Ovary (tissue), 10 donors: ENCODE measurements at regions of chr12 and their contacts with region 1.

Region 1: DNA sequence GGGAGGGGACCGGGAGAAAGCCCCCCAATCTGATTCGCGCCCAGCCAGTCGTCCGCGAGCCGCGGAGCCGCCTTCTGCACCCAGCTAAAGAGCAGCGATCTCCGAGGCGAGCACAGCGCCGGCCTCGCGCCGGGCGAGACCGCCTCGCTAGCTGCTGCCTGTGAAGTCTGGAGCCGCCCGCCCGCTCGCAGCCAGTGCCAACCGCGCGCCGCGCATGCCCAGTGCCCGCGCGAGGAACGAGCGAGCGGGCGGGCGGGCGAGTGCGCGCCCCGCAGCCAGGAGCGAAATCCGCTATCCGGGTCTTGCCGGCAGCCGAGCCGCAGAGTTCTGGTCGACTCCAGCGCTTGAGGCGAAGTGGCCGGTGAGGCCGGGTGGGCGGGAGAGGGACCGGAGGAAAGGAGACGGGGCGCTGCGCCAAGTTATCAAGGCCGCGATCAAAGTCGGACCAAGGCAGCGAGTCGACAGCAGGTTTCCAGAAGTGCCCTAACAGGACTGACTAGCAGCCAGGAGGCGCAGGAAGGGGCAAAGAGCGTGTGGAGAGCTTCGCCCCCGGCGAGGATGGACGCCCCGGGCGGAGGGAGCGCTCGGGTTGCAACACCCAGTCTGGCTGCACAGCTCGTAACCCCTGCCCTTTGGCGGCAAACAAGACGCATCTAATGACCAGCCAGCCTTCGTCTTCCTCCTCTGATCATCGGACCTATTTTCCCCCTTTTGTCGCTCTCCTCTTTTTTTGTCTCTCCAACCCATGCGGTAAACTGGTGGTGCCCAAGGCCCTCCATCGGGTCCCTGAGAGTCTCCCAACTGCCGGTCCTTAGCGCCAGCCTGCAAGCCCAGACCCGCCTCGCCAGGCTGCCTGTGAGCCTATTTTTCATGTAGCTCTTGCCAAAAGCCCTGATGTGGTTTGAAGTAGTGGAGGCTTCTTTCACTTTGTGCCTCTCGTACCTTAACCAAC is at the start of gene EPS8:
- DNase-seq: peak; percentile 90 to 96 (median 94)
- H3K4me3 ChIP-seq: peak within 1 kb of the TSS; percentile 93
- H3K27ac ChIP-seq: peak within 1 kb of the TSS; percentile 58 to 82
- H3K4me1 ChIP-seq: no peaks in the 10 kb centered on the region
- H3K27me3 ChIP-seq: no peaks in the 10 kb centered on the region
- CTCF ChIP-seq: peak; percentile 11 to 30 (median 21)
- EP300 ChIP-seq: peak; percentile 3
- POLR2A ChIP-seq: peak; percentile 82
- total RNA-seq, gene EPS8: 56.2 to 94.9 (median 77.4) TPM

Region 2: GRCh38 chr12:15629761-15630160 is 159.7 kb before region 1 on chr12:
- intact Hi-C with region 1: loop called in 1 of 4 experiments (anchors 10 kb)
- DNase-seq: no peak
- H3K4me3 ChIP-seq: no peak overlapping the region
- H3K27ac ChIP-seq: peak overlapping the region; percentile 23 to 51
- H3K4me1 ChIP-seq: peaks cover 7% of the 10 kb centered on the region
- H3K27me3 ChIP-seq: no peaks in the 10 kb centered on the region
- CTCF ChIP-seq: no peak
- EP300 ChIP-seq: no peak
- POLR2A ChIP-seq: no peak

Region 3: GRCh38 chr12:15693228-15693911 is 96.1 kb before region 1 on chr12:
- intact Hi-C with region 1: loop called in 1 of 4 experiments (anchors 5 kb)
- DNase-seq: no peak
- H3K4me3 ChIP-seq: no peak overlapping the region
- H3K27ac ChIP-seq: no peak overlapping the region
- H3K4me1 ChIP-seq: peaks cover 11% of the 10 kb centered on the region
- H3K27me3 ChIP-seq: no peaks in the 10 kb centered on the region
- CTCF ChIP-seq: no peak
- EP300 ChIP-seq: no peak
- POLR2A ChIP-seq: no peak

Region 4: DNA sequence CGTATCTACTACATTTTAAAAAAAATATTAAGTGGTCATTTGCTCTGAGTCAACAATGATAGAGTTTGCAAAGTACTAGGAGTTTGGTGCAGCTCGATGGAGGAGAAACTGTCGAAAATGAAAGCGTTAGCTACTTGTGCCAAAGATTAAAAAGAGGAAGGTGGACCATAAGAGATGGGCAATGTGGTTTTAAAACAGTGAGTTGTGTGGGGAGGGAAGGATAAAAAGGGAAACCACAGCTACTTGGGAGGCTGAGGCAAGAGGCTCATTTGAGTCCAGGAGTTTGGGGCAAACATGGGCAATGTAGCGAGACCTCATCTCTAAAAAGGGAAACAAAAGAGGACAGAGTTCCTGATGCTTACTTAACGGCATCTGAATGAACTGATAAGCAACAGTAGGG is 74.5 kb after region 1 on chr12:
- intact Hi-C with region 1: no loop called
- DNase-seq: no peak
- H3K4me3 ChIP-seq: no peak overlapping the region
- H3K27ac ChIP-seq: no peak overlapping the region
- H3K4me1 ChIP-seq: no peaks in the 10 kb centered on the region
- H3K27me3 ChIP-seq: no peaks in the 10 kb centered on the region
- CTCF ChIP-seq: no peak
- EP300 ChIP-seq: no peak
- POLR2A ChIP-seq: no peak

Region 5: GRCh38 chr12:15882118-15882971 is 92.8 kb after region 1 on chr12 and contains the start of gene STRAP:
- intact Hi-C with region 1: no loop called
- DNase-seq: peak; percentile 96 to 99 (median 98)
- H3K4me3 ChIP-seq: peak within 1 kb of the TSS; percentile 95
- H3K27ac ChIP-seq: peak within 1 kb of the TSS; percentile 90 to 95
- H3K4me1 ChIP-seq: peaks cover 2% of the 10 kb centered on the region
- H3K27me3 ChIP-seq: no peaks in the 10 kb centered on the region
- CTCF ChIP-seq: no peak
- EP300 ChIP-seq: no peak
- POLR2A ChIP-seq: peak; percentile 99
- total RNA-seq, gene STRAP: 31.7 to 87.6 (median 81.2) TPM

Region 6: DNA sequence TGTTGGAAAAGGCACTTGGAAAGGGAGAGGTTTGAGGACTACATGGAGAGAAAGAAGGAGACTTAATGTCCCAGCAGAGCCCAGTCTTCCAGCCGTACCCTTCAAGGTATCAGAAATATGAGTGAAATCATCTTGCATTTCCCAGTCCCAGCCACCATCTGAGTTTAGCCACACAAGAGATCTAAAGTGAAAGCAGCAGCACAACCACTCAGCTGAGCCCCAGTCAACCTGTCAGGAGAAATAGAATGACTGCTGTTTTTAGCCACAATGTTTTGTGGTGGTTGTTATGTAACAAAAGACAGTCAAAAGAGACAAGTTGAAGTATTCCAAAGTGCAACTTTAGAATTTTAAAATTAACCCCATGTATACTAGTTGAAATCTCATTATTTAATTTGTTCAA is 149.6 kb after region 1 on chr12:
- intact Hi-C with region 1: no loop called
- DNase-seq: no peak
- H3K4me3 ChIP-seq: no peak overlapping the region
- H3K27ac ChIP-seq: no peak overlapping the region
- H3K4me1 ChIP-seq: no peaks in the 10 kb centered on the region
- H3K27me3 ChIP-seq: no peaks in the 10 kb centered on the region
- CTCF ChIP-seq: no peak
- EP300 ChIP-seq: no peak
- POLR2A ChIP-seq: no peak

Region 7: GRCh38 chr12:15996254-15996653 is 206.8 kb after region 1 on chr12:
- intact Hi-C with region 1: no loop called
- DNase-seq: no peak
- H3K4me3 ChIP-seq: no peak overlapping the region
- H3K27ac ChIP-seq: no peak overlapping the region
- H3K4me1 ChIP-seq: no peaks in the 10 kb centered on the region
- H3K27me3 ChIP-seq: no peaks in the 10 kb centered on the region
- CTCF ChIP-seq: no peak
- EP300 ChIP-seq: no peak
- POLR2A ChIP-seq: no peak